WTC11 (cell line): ENCODE measurements at regions of chr16 and their contacts with region 1.

Region 1: GRCh38 chr16:22190776-22191531 is 15.1 kb upstream of the EEF2K start:
- DNase-seq: peak; percentile 100
- ATAC-seq: peak; percentile 78
- H3K4me3 Mint-ChIP-seq: peak overlapping the region; percentile 88
- H3K27ac Mint-ChIP-seq: peak overlapping the region; percentile 98
- H3K4me1 Mint-ChIP-seq: peaks cover 38% of the 10 kb centered on the region
- H3K27me3 Mint-ChIP-seq: peaks cover 18% of the 10 kb centered on the region
- CTCF ChIP-seq: no peak

Region 2: DNA sequence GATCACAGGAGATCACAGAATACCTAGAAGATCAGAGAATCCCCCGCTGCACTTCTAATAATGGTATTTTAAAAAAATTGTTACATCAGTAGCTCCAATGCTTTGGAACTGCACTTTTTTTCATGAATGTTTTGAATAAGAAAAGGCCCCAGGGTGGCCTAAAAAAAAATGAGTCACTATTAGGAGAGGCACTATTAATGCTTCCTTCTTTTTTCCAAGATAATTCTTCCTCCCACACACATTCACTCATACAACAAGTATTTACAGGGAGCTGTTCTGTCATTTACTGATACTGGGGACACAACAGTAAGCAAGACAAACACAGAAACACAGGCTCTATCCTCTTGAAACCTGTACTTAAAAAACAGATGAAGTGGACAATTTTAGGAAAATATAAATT is 189.4 kb before region 1 on chr16:
- CTCF ChIA-PET with region 1: interaction called, 53 read pairs
- POLR2A ChIA-PET with region 1: no interaction called
- DNase-seq: no peak
- ATAC-seq: no peak
- H3K4me3 Mint-ChIP-seq: peak overlapping the region; percentile 41; the same call in 1 of the 2 replicates
- H3K27ac Mint-ChIP-seq: no peak overlapping the region
- H3K4me1 Mint-ChIP-seq: peaks cover 8% of the 10 kb centered on the region
- H3K27me3 Mint-ChIP-seq: peaks cover 6% of the 10 kb centered on the region
- CTCF ChIP-seq: no peak

Region 3: DNA sequence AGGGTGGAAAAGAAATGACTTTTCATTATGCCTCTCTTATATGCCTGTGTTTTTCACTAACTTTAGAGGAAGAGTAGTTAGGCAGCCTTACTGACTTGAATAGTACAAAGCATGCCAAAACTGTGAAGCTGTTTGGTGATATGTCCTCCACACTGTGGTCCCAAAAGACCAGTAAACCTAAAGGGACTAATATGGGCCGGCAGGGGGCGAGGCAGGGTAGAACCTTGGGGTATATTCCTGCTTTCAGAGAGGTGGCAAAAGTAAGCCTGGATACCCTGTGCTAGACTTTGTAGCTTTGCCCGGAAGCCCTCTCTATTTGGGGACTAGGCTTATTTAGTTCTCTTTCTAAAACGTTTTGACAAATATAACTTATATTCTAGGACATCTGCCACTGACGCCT is 135.1 kb before region 1 on chr16:
- CTCF ChIA-PET with region 1: interaction called, 24 read pairs
- POLR2A ChIA-PET with region 1: no interaction called
- DNase-seq: peak; percentile 73
- ATAC-seq: peak; percentile 96
- H3K4me3 Mint-ChIP-seq: no peak overlapping the region
- H3K27ac Mint-ChIP-seq: peak overlapping the region; percentile 22; the same call in 1 of the 2 replicates
- H3K4me1 Mint-ChIP-seq: peaks cover 5% of the 10 kb centered on the region; the same call in 1 of the 2 replicates
- H3K27me3 Mint-ChIP-seq: no peaks in the 10 kb centered on the region
- CTCF ChIP-seq: peak; percentile 47

Region 4: DNA sequence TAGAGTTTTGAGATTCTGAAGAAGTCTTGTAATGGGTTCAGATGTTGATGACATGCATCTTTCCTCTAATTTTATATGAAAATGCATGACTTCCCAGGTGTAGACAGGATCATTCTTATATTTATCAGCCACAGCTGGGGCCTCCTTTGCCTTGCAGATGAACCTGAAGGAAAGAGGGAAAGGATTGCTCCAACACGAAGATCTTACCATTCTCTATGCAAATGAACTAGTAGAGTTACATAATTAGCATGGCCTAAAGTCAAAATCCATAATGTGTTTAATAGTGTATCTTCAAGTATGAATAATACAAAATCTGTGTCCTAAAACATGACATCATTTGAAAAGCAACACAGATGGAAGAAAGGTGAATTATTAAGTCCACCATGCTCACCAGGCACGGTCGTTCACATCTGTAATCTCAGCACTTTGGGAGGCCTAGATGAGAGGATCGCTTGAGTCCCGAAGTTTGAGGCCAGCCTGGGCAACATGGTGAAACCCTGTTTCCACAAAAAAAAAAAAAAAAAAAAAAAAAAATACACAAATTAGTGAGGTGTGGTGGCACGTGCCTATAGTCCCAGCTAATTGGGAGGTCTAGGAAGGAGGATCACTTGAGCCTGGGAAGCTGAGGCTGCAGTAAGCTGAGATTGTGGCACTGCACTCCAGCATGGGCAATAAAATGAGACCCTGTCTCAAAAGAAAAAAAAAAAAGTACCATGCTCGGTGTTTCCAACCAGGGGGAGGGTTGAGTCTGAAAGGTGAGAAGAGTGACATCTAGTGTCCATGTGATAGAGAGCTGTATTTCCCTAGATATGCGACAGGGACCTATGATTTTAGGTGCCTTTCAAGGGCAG is 92.3 kb before region 1 on chr16:
- CTCF ChIA-PET with region 1: interaction called, 25 read pairs
- POLR2A ChIA-PET with region 1: no interaction called
- DNase-seq: no peak
- ATAC-seq: peak; percentile 85
- H3K4me3 Mint-ChIP-seq: no peak overlapping the region
- H3K27ac Mint-ChIP-seq: peak overlapping the region; percentile 35; the same call in 1 of the 2 replicates
- H3K4me1 Mint-ChIP-seq: peaks cover 28% of the 10 kb centered on the region
- H3K27me3 Mint-ChIP-seq: no peaks in the 10 kb centered on the region; the same call in 1 of the 2 replicates
- CTCF ChIP-seq: no peak

Region 5: GRCh38 chr16:22141746-22142145 is 49.2 kb before region 1 on chr16:
- CTCF ChIA-PET with region 1: interaction called, 24 read pairs
- POLR2A ChIA-PET with region 1: no interaction called
- DNase-seq: peak; percentile 55
- ATAC-seq: peak; percentile 95
- H3K4me3 Mint-ChIP-seq: no peak overlapping the region
- H3K27ac Mint-ChIP-seq: no peak overlapping the region
- H3K4me1 Mint-ChIP-seq: peaks cover 10% of the 10 kb centered on the region; the same call in 1 of the 2 replicates
- H3K27me3 Mint-ChIP-seq: no peaks in the 10 kb centered on the region
- CTCF ChIP-seq: peak; percentile 58

Region 6: DNA sequence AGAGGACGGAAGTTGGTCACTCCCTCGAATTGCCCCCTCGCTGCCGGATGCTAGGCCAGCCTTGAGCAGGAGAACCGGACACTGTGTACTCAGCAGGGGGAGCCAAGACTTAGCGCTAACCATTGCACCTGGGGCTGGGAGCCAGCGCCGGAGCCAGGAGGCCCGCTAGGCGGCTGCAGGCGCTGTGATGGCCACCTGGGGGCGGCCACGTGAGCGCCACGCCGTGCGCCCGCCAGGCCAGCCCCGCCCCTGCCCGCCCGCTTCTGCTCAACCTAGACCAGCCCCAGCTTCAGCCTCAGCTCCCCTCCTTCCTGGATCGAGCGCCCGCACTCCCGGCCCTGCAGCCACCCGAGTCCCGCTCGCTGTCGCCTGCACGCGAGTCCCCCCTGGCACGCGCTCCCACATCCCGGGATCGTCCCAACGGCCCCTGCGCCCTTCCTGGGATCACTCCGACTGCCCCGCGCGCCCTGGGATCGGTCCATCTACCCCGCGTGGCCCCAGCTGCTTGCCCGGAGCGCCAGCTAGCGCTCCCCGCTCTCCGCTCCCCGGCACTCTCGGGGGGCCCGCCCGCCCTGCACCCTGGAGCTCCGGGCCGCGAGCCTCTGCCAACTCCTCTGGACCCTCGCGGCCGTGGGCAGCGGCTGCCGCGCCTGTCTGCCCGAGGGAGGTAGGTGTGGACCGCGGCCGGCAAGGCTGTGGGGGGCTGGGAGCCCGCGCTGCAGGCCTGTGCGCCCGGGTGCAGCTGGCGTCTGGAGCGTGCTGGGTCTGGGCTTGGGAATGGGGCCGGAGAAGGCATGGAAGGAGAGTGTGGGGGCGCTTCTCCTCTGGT is 15.3 kb after region 1 on chr16 and contains the start of gene EEF2K:
- CTCF ChIA-PET with region 1: interaction called, 14 read pairs
- POLR2A ChIA-PET with region 1: interaction called, 7 read pairs
- DNase-seq: peak; percentile 88
- ATAC-seq: peak; percentile 88
- H3K4me3 Mint-ChIP-seq: peak within 1 kb of the TSS; percentile 96
- H3K27ac Mint-ChIP-seq: peak within 1 kb of the TSS; percentile 69
- H3K4me1 Mint-ChIP-seq: peaks cover 21% of the 10 kb centered on the region
- H3K27me3 Mint-ChIP-seq: no peaks in the 10 kb centered on the region
- CTCF ChIP-seq: peak; percentile 57
- total RNA-seq, gene EEF2K: 23.8 to 27.7 TPM (median 26.7 TPM) in 3 replicates

Region 7: GRCh38 chr16:22262460-22262859 is 71.5 kb after region 1 on chr16:
- CTCF ChIA-PET with region 1: no interaction called
- POLR2A ChIA-PET with region 1: no interaction called
- DNase-seq: no peak
- ATAC-seq: no peak
- H3K4me3 Mint-ChIP-seq: no peak overlapping the region
- H3K27ac Mint-ChIP-seq: no peak overlapping the region
- H3K4me1 Mint-ChIP-seq: no peaks in the 10 kb centered on the region
- H3K27me3 Mint-ChIP-seq: no peaks in the 10 kb centered on the region
- CTCF ChIP-seq: no peak

Region 8: GRCh38 chr16:22272870-22273595 is 82.1 kb after region 1 on chr16:
- CTCF ChIA-PET with region 1: no interaction called
- POLR2A ChIA-PET with region 1: no interaction called
- DNase-seq: no peak
- ATAC-seq: no peak
- H3K4me3 Mint-ChIP-seq: no peak overlapping the region
- H3K27ac Mint-ChIP-seq: no peak overlapping the region
- H3K4me1 Mint-ChIP-seq: no peaks in the 10 kb centered on the region; the same call in 1 of the 2 replicates
- H3K27me3 Mint-ChIP-seq: no peaks in the 10 kb centered on the region
- CTCF ChIP-seq: no peak